Testis (tissue), 5 donors: ENCODE measurements at regions of chr20 and their contacts with region 1.

Region 1: DNA sequence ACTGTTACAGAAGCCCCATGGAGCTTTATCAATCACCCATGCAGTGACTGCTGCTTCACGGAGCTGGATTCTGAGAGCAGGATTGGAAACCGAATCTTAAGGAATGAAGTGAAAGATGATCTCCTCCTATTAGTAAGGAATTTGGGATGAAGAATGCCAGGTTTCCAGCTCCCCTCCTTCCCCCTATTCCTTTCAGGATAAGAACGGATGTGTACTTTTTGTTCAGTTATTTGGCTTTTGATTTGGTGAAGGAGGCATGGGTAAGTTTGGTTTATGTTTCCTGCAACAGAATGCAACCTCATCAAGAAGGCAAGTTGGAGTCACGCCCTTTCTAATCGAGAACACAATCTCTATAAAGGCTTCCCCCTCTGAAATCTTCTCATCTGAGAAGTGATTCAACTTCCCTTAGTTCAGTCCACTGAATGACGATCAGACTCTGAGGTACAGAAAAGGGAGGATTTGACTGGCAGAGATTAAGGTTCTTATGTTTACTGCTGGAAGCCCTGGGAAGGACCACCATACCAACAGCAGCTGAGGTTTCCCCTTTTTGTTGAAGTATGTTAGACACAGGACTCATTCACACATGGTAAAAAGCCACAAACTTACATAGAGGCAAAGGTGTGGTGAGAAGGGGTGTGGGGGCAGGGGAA is 5.5 kb downstream of the ELMO2 start:
- DNase-seq: no peak
- H3K4me3 ChIP-seq: no peak overlapping the region
- H3K27ac ChIP-seq: peak overlapping the region; percentile 80 to 86
- H3K4me1 ChIP-seq: peaks cover 57% of the 10 kb centered on the region
- H3K27me3 ChIP-seq: no peaks in the 10 kb centered on the region
- CTCF ChIP-seq: no peak
- POLR2A ChIP-seq: no peak

Region 2: DNA sequence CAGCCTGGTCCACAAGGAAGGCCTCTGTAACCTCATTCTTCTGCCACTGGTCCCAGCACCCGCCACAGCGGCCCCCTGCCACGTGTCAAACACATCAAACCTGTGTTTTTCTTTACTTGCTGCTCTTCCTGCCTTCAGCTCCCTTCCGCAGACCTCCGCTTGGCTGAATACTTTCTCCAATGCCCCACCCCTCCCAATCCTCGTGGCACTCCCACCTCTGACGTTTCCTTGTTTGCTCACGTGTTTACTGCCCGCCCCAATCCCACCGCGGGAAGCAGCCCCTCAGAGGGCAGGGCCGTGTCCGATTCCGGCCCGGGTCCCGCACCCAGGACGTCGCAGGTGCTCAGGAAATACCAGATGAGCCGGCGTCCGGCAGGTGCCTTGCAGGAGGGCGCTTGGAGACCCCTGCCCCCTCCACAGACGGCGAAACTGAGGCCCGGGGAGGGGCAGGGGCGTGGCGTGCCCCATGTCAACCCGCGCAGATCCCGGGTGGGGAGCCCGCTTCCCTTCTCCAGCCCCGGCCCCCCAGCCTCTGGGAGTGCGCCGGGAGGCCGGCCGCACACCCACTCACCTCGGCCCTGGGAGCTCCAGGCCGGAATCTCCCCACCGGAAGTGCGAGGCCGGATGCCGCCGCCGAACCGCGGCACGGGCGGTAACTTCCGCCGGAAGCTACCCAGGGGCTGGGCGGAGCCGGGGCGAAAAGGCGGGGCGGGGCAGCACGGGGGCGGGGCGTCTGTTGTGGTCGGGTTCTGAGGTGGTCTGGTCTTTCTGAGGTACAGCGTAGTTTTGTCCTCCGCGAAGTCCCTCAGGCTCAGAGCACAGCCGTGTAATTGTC is 36.9 kb before region 1 on chr20:
- intact Hi-C with region 1: loop called (anchors 5 kb)
- DNase-seq: peak; percentile 91
- H3K4me3 ChIP-seq: peak overlapping the region; percentile 87 to 96
- H3K27ac ChIP-seq: peak overlapping the region; percentile 95 to 98
- H3K4me1 ChIP-seq: peaks cover 38% of the 10 kb centered on the region
- H3K27me3 ChIP-seq: no peaks in the 10 kb centered on the region
- CTCF ChIP-seq: no peak
- POLR2A ChIP-seq: no peak